ENCODE measurements at regions of chr13 and their contacts with region 1.

Region 1: GRCh38 chr13:25836574-25837336 is 215.1 kb downstream of the SHISA2 start:
- DNase-seq: no peak

Region 2: DNA sequence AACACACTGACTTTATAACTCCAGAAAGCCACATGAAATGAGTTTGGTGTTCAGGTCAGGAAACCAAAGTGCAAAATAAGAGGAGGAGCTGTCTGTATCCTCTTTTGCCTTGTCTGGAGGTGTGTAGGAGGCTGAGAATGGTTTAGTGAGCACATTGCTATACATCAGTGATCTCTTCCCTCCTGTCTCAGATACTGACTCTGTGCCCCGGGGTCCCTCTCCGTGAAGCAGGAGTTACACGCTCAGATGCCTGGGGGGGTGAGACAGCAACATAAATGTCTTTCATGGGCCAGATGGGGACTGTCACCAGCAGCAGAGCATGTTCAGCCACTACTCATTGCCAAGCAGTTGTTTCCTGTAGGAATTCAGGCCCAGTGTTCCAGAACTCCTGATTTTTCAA is 179.6 kb before region 1 on chr13:
- CTCF ChIA-PET with region 1: interaction called, 11 read pairs
- POLR2A ChIA-PET with region 1: no interaction called
- DNase-seq: no peak

Region 3: GRCh38 chr13:25816239-25816638 is 20.5 kb before region 1 on chr13:
- CTCF ChIA-PET with region 1: no interaction called
- POLR2A ChIA-PET with region 1: no interaction called
- DNase-seq: no peak

Region 4: GRCh38 chr13:25847635-25848626 is 11.2 kb after region 1 on chr13:
- CTCF ChIA-PET with region 1: interaction called, 11 read pairs
- POLR2A ChIA-PET with region 1: no interaction called
- DNase-seq: no peak